Breast epithelium (tissue), 4 donors: ENCODE measurements at regions of chr12 and their contacts with region 1.

Region 1: GRCh38 chr12:131850856-131851559 is 22.8 kb downstream of the MMP17 start:
- DNase-seq: no peak
- H3K4me3 ChIP-seq: peak overlapping the region in 2 of 3 donors; percentile 11 to 44
- H3K27ac ChIP-seq: no peak overlapping the region
- H3K4me1 ChIP-seq: no peaks in the 10 kb centered on the region
- H3K27me3 ChIP-seq: peaks cover 0 to 18% of the 10 kb centered on the region in 2 donors
- CTCF ChIP-seq: peak in 2 of 3 donors; percentile 44 to 84
- POLR2A ChIP-seq: no peak

Region 2: GRCh38 chr12:131793243-131794022 is 57.6 kb before region 1 on chr12:
- intact Hi-C with region 1: no loop called
- DNase-seq: no peak
- H3K4me3 ChIP-seq: no peak overlapping the region
- H3K27ac ChIP-seq: no peak overlapping the region
- H3K4me1 ChIP-seq: no peaks in the 10 kb centered on the region
- H3K27me3 ChIP-seq: no peaks in the 10 kb centered on the region
- CTCF ChIP-seq: no peak
- POLR2A ChIP-seq: no peak

Region 3: GRCh38 chr12:131808744-131809371 is 42.1 kb before region 1 on chr12:
- intact Hi-C with region 1: no loop called
- DNase-seq: no peak
- H3K4me3 ChIP-seq: peak overlapping the region in 2 of 3 donors; percentile 9 to 36
- H3K27ac ChIP-seq: no peak overlapping the region
- H3K4me1 ChIP-seq: no peaks in the 10 kb centered on the region
- H3K27me3 ChIP-seq: no peaks in the 10 kb centered on the region
- CTCF ChIP-seq: no peak
- POLR2A ChIP-seq: no peak

Region 4: GRCh38 chr12:132003846-132004245 is 152.8 kb after region 1 on chr12:
- intact Hi-C with region 1: loop called (anchors 10 kb)
- DNase-seq: no peak
- H3K4me3 ChIP-seq: no peak overlapping the region
- H3K27ac ChIP-seq: no peak overlapping the region
- H3K4me1 ChIP-seq: no peaks in the 10 kb centered on the region
- H3K27me3 ChIP-seq: no peaks in the 10 kb centered on the region
- CTCF ChIP-seq: no peak
- POLR2A ChIP-seq: no peak

Region 5: GRCh38 chr12:132153501-132154340 is 302.7 kb after region 1 on chr12:
- intact Hi-C with region 1: no loop called
- DNase-seq: no peak
- H3K4me3 ChIP-seq: peak overlapping the region in 2 of 3 donors; percentile 14 to 21
- H3K27ac ChIP-seq: no peak overlapping the region
- H3K4me1 ChIP-seq: no peaks in the 10 kb centered on the region
- H3K27me3 ChIP-seq: no peaks in the 10 kb centered on the region
- CTCF ChIP-seq: peak in 2 of 3 donors; percentile 75 to 85
- POLR2A ChIP-seq: no peak